GM23248 (cell line): ENCODE measurements at regions of chr11 and their contacts with region 1.

Region 1: DNA sequence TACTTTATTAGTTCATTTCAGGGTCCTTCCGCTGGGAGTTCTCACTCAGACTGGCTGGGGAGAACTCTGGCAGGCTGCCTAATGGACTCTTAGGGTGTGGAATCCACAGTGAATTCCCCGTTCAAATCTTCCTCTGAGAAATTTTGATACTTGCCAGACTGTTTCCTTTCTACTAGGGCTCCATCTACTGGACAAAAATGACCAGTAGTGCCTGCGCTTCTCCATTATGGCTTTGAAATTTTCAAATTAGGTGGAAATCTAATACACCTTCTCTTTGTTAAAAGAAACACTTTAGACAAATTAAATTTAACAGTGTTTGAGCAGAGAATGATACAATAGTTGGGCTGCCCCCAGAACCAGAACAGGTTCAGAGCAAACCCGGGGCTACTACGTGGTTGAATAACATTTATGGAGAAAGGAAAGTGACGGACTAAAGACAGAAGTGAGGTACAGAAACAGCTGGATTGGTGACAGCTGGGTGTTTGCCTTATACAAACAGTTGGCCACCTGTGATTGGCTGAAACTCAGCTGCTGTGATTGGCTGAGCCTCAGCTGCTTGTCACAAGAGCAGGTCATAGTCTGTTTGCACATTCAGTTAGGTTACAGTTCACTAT is 52.9 kb upstream of the FDX1 start:
- DNase-seq: peak; percentile 82
- H3K4me3 ChIP-seq: no peak overlapping the region
- H3K27ac ChIP-seq: no peak overlapping the region
- H3K4me1 ChIP-seq: peaks cover 21% of the 10 kb centered on the region
- H3K27me3 ChIP-seq: no peaks in the 10 kb centered on the region

Region 2: GRCh38 chr11:109971184-109971523 is 405.7 kb before region 1 on chr11:
- in situ Hi-C with region 1: loop called (anchors 25 kb)
- DNase-seq: peak; percentile 60
- H3K4me3 ChIP-seq: no peak overlapping the region
- H3K27ac ChIP-seq: no peak overlapping the region
- H3K4me1 ChIP-seq: peaks cover 19% of the 10 kb centered on the region
- H3K27me3 ChIP-seq: no peaks in the 10 kb centered on the region

Region 3: GRCh38 chr11:110200241-110200640 is 176.6 kb before region 1 on chr11:
- in situ Hi-C with region 1: loop called (anchors 10 kb)
- DNase-seq: peak; percentile 54
- H3K4me3 ChIP-seq: no peak overlapping the region
- H3K27ac ChIP-seq: no peak overlapping the region
- H3K4me1 ChIP-seq: peaks cover 35% of the 10 kb centered on the region
- H3K27me3 ChIP-seq: no peaks in the 10 kb centered on the region